Psoas muscle (tissue), 8 donors: ENCODE measurements at regions of chr1 and their contacts with region 1.

Region 1: DNA sequence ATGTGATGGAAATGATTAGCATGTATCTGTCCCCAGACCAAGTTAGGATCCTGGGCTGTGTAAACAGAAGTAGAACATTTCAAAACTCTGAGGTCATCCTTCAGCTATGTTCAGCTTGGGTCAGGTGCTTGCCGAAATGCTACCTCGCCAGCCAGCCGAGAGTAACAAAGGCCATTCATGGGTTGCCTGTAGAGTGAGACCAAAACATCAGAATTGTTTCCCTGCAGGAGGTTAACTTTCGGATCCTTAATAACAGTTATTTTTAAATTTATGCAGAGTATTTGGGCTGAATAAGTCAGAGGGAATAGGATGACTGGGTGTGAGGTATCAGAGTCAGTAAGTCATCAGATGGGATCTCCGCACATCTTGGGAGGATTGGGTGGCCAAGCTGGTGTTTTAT is 35.6 kb downstream of the SMYD2 start:
- DNase-seq: no peak
- ATAC-seq: peak; percentile 83 to 86 (median 84)
- H3K4me3 ChIP-seq: no peak overlapping the region
- H3K27ac ChIP-seq: peak overlapping the region; percentile 65
- H3K4me1 ChIP-seq: peaks cover 34% of the 10 kb centered on the region
- H3K27me3 ChIP-seq: no peaks in the 10 kb centered on the region
- CTCF ChIP-seq: no peak

Region 2: DNA sequence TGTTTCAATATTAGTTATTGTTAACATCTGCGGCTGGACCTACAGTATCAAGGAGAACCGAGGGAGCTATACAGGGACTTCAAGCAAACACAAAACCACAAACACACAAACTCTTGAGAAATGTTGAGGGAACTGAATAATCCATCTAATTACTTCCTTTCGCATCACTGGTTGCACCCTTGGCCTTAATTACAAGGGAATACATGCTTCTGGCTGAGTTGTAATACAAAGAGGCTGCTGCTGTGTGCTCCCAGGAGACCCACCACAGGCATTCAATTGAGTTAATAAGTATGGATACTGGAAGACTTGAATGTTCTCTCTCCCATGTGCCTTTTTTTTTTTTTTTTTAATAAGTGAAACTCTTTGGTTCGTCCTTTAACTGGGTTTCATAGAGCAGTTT is 52.4 kb before region 1 on chr1:
- intact Hi-C with region 1: no loop called
- DNase-seq: no peak
- ATAC-seq: no peak
- H3K4me3 ChIP-seq: no peak overlapping the region
- H3K27ac ChIP-seq: no peak overlapping the region
- H3K4me1 ChIP-seq: peaks cover 22% of the 10 kb centered on the region
- H3K27me3 ChIP-seq: no peaks in the 10 kb centered on the region
- CTCF ChIP-seq: no peak

Region 3: DNA sequence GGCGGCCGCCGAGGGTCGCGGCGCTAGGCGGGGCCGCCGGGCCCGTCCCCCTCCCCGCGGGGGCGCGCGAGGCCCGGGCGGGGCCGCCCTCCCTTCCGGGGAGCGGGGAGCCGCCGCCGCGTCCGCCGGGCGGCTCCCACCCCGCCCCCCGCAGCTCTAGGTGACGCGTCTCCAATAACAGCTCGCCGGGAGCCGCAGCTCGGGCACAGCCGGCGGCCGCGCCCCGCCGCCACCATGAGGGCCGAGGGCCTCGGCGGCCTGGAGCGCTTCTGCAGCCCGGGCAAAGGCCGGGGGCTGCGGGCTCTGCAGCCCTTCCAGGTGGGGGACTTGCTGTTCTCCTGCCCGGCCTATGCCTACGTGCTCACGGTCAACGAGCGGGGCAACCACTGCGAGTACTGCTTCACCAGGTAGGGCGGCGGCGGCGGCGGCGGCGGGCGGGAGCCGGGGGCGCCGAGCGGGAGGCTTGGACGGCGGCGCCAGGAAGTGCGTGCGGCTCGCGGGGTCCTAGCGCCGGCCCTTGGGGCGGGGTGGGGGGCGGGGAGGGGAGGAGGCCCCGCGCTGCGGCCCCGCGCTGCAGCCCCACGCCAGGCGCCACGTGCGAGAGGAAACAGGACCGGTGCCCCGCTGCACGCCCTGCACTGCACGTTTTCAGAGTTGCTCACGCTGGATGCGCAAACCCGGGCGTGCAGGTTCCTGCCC is 35.4 kb before region 1 on chr1 and contains the start of gene SMYD2:
- intact Hi-C with region 1: loop called (anchors 5 kb)
- DNase-seq: peak; percentile 77 to 87
- ATAC-seq: peak; percentile 84 to 87 (median 86)
- H3K4me3 ChIP-seq: peak within 1 kb of the TSS; percentile 89
- H3K27ac ChIP-seq: peak within 1 kb of the TSS; percentile 94
- H3K4me1 ChIP-seq: peaks cover 22% of the 10 kb centered on the region
- H3K27me3 ChIP-seq: no peaks in the 10 kb centered on the region
- CTCF ChIP-seq: no peak
- total RNA-seq, gene SMYD2: 37.1 to 75.3 (median 54.3) TPM